Endothelial cell of umbilical vein (primary cell): ENCODE measurements at regions of chr14 and their contacts with region 1.

Region 1: GRCh38 chr14:93184388-93185353 is at the starts of genes LYSET and MOAP1:
- DNase-seq: peak; percentile 88
- H3K4me3 ChIP-seq: peak within 1 kb of the TSS; percentile 58 to 98 (median 96)
- H3K27ac ChIP-seq: peak within 1 kb of the TSS; percentile 98
- H3K4me1 ChIP-seq: peaks cover 21% of the 10 kb centered on the region
- H3K27me3 ChIP-seq: no peaks in the 10 kb centered on the region
- CTCF ChIP-seq: peak in 1 of 2 donors; percentile 27
- POLR2A ChIP-seq: peak; percentile 91
- total RNA-seq, gene LYSET: 18.4 and 18.8 TPM in 2 replicates
- total RNA-seq, gene MOAP1: 15.0 and 16.6 TPM in 2 replicates

Region 2: DNA sequence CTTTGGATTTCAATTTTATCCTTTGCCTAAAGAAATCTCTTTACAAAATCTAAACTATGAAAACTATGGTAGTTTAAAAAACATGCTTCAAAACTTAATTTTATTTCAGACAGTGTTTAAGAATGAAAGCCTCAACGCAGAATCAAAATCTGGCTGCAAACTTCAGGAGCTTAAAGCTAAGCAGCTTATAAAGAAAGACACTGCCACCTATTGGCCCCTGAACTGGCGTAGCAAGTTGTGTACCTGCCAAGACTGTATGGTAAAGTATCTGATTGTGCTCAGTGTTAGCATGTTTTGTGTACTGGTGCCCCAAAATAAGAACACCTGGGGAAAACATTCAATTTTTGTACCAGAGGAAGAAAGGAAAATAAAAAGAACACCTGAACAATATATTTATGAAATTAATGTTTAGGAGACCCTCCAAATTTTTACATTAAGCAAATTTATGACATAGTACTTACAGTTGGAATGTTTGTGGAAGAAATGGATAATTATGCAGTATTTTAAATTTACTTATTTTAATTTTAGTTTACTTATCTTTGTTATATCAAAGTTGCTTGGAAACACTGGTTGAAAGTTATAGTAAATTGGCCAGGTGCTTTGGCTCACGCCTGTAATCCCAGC is 34.5 kb after region 1 on chr14:
- CTCF ChIA-PET with region 1: interaction called, 12 read pairs
- POLR2A ChIA-PET with region 1: no interaction called
- dilution Hi-C with region 1: no loop called
- intact Hi-C with region 1: no loop called
- DNase-seq: peak; percentile 59
- H3K4me3 ChIP-seq: no peak overlapping the region
- H3K27ac ChIP-seq: no peak overlapping the region
- H3K4me1 ChIP-seq: no peaks in the 10 kb centered on the region
- H3K27me3 ChIP-seq: no peaks in the 10 kb centered on the region
- CTCF ChIP-seq: peak; percentile 45 to 68
- POLR2A ChIP-seq: no peak